ENCODE measurements at regions of chr10 and their contacts with region 1.

Region 1: DNA sequence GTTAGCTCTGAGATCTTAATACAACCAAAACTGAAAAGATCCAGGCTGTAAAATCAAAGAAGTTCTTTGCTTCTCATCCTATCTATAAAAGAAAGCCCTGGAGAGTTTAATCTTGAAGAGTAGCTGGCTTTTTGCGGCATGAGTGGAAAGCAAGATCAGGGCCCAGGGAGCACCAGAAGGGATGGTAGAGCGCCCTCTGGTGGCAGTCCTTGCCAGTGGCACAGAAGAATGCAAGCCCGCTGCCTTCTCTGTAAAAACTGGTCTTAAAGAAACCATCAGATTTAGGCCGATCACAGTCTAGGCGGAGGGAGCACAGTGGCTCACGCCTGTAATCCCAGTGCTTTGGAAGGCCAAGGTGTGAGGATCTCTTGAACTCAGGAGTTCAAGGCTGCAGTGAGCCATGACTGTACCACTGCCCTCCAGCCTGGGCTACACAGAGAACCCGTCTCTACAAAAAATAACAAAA is 35.6 kb downstream of the CPN1 start:
- DNase-seq: peak; percentile 38 to 80 (median 71)
- ATAC-seq: peak; percentile 86
- H3K4me3 ChIP-seq: no peak overlapping the region
- H3K4me3 Mint-ChIP-seq: no peak overlapping the region
- H3K27ac ChIP-seq: no peak overlapping the region
- H3K27ac Mint-ChIP-seq: peak overlapping the region in 2 of 9 donors; percentile 9 to 42
- H3K4me1 ChIP-seq: no peaks in the 10 kb centered on the region
- H3K4me1 Mint-ChIP-seq: peaks cover 0 to 6% (median 0%) of the 10 kb centered on the region in 7 donors
- H3K27me3 ChIP-seq: no peaks in the 10 kb centered on the region
- H3K27me3 Mint-ChIP-seq: peaks cover 0 to 13% (median 6%) of the 10 kb centered on the region in 5 donors

Region 2: GRCh38 chr10:99854860-99855259 is 191.2 kb before region 1 on chr10:
- CTCF ChIA-PET with region 1: interaction called, 12 read pairs
- POLR2A ChIA-PET with region 1: no interaction called
- intact Hi-C with region 1: no loop called
- DNase-seq: no peak
- ATAC-seq: no peak
- H3K4me3 ChIP-seq: no peak overlapping the region
- H3K4me3 Mint-ChIP-seq: no peak overlapping the region
- H3K27ac ChIP-seq: no peak overlapping the region
- H3K27ac Mint-ChIP-seq: no peak overlapping the region
- H3K4me1 ChIP-seq: no peaks in the 10 kb centered on the region
- H3K4me1 Mint-ChIP-seq: no peaks in the 10 kb centered on the region
- H3K27me3 ChIP-seq: no peaks in the 10 kb centered on the region
- H3K27me3 Mint-ChIP-seq: peaks cover 7 to 15% (median 10%) of the 10 kb centered on the region in 5 donors

Region 3: DNA sequence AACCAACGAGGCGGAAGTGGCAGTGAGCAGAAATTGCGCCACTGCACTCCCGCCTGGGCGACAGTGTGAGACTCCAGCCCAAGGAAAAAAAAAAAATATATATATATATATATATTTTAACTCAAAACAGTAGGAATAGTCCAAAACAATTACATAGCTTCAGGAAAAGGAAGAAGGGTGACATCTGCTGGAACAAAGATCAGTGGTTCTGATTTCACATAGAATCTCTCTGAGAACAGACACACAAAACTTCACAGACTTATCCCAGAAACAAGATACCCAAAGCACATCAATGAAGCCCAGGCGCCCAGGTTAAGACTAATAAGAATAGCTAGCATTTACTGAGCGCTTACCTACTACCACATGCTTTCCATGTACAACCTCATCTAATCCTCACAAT is 81.3 kb before region 1 on chr10:
- CTCF ChIA-PET with region 1: no interaction called
- POLR2A ChIA-PET with region 1: no interaction called
- intact Hi-C with region 1: no loop called
- DNase-seq: no peak
- ATAC-seq: no peak
- H3K4me3 ChIP-seq: no peak overlapping the region
- H3K4me3 Mint-ChIP-seq: no peak overlapping the region
- H3K27ac ChIP-seq: no peak overlapping the region
- H3K27ac Mint-ChIP-seq: no peak overlapping the region
- H3K4me1 ChIP-seq: no peaks in the 10 kb centered on the region
- H3K4me1 Mint-ChIP-seq: peaks cover 0 to 5% (median 0%) of the 10 kb centered on the region in 7 donors
- H3K27me3 ChIP-seq: no peaks in the 10 kb centered on the region
- H3K27me3 Mint-ChIP-seq: no peaks in the 10 kb centered on the region

Region 4: DNA sequence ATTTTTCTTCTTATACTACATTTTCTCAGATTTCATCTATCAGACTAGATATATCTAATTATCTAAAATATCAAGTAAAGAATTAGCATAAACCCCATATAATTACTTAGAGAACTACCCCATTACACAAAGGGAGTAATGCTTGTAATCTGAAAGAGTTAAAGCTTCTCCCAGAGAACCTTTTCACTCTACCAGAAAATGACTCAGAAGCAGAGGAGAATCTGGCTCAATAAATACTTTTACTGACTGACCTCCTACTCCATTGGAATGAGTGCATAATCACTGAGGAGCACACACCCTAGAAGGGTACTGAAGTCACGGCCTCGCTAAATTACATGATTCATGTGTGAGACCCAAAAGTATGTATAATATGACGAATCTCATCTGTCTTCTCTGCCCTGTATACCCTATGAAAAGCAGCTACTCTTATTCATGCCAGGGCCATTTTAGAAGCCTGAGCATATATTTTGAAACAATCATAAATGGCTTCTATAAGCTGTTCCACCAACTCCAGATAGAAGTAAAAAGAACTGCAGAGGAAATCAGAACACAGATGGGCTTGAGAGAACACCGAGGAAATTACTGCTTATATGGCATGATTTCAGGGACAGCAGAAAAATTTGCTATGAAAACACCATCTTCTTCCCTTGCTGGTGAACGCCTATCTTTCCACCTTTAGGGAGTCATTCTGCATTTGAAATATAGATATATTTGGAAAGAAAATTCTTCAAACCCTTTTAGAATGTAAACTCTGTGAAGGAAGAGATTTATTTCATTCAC is 69.0 kb before region 1 on chr10:
- CTCF ChIA-PET with region 1: interaction called, 3 read pairs
- POLR2A ChIA-PET with region 1: no interaction called
- intact Hi-C with region 1: loop called (anchors 1 to 10 kb)
- DNase-seq: no peak
- ATAC-seq: no peak
- H3K4me3 ChIP-seq: no peak overlapping the region
- H3K4me3 Mint-ChIP-seq: no peak overlapping the region
- H3K27ac ChIP-seq: no peak overlapping the region
- H3K27ac Mint-ChIP-seq: no peak overlapping the region
- H3K4me1 ChIP-seq: no peaks in the 10 kb centered on the region
- H3K4me1 Mint-ChIP-seq: peaks cover 0 to 7% (median 0%) of the 10 kb centered on the region in 7 donors
- H3K27me3 ChIP-seq: no peaks in the 10 kb centered on the region
- H3K27me3 Mint-ChIP-seq: no peaks in the 10 kb centered on the region

Measured in naive thymus-derived CD4-positive, alpha-beta T cell (primary cell).